ENCODE measurements at regions of chr4 and their contacts with region 1.

Region 1: DNA sequence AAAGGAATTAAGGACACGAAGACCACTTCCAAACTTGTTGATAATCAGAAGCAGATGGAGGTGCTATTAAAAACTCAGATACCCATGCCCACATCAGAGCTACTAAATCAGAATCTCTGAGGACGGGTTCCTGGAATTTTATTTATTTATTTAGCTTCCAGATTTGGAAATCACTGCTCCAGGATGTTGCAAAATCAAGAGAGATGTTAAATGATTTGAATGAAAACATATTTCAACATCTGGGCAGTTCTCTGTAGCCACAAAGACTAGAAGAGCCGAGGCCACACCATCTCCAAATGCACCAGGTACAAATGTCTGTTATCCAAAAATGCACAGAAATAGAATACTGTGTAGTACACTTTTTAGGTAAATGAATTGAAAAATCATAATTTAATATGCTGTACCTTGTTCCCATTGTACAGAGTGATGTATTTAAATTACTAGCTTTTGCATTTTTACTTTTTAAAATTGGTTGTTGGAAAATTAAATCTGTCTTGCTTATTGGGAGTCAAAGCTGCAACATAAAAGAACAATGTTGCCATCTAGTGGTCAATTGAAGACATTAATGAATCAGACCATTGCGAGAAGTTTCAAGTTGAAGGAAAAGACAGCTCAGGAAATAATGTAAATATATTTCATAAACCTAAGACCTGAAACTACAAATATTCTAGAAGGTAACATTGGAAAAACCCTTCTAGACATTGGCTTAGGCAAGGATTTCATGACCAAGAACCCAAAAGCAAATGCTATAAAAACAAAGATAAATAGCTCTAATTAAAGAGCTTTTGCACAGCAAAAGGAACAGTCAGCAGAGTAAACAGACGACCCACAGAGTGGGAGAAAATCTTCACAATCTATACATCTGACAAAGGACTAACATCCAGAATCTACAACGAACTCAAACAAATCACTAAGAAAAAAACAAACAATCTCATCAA is 151.3 kb upstream of the TTC29 start:
- DNase-seq: no peak
- ATAC-seq: peak in 1 of 2 donors; percentile 48
- H3K4me3 ChIP-seq: no peak overlapping the region
- H3K27ac ChIP-seq: no peak overlapping the region
- H3K4me1 ChIP-seq: no peaks in the 10 kb centered on the region
- H3K27me3 ChIP-seq: no peaks in the 10 kb centered on the region

Region 2: DNA sequence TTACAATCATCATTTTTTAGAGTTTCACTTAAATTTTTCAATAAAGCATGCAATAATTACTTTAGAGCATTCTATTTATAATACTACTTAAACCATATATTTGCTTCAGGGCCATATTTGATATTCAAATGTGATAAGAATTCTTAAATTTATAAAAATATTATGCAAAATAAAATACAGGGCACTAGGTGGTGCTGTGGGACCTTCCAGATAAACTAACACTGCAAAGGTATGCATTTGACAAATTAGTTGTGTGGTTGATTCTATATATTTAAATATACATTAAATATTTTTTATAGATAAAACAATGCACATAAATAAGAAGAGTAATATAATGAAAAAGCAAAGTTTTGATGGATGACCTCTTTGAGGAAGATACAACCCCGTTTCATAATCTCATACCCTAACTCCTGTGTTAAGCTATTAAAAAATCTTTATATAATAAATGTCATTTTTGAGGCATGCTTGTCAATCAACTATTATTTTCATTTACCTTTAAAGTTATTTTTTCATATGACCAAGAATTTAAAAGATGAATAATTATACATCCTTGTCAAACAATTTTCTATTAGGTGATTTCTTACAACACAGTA is 754.2 kb before region 1 on chr4:
- intact Hi-C with region 1: loop called in 2 of 4 experiments (anchors 5 to 10 kb)
- DNase-seq: no peak
- ATAC-seq: no peak
- H3K4me3 ChIP-seq: no peak overlapping the region
- H3K27ac ChIP-seq: no peak overlapping the region
- H3K4me1 ChIP-seq: no peaks in the 10 kb centered on the region
- H3K27me3 ChIP-seq: no peaks in the 10 kb centered on the region

Region 3: GRCh38 chr4:147019061-147019460 is 77.9 kb before region 1 on chr4:
- intact Hi-C with region 1: loop called (anchors 2 to 5 kb)
- DNase-seq: peak; percentile 42 to 85 (median 77)
- ATAC-seq: peak; percentile 81 to 86
- H3K4me3 ChIP-seq: no peak overlapping the region
- H3K27ac ChIP-seq: no peak overlapping the region
- H3K4me1 ChIP-seq: no peaks in the 10 kb centered on the region
- H3K27me3 ChIP-seq: no peaks in the 10 kb centered on the region

Region 4: GRCh38 chr4:147029296-147029695 is 67.6 kb before region 1 on chr4:
- intact Hi-C with region 1: loop called in 1 of 4 experiments (anchors 5 kb)
- DNase-seq: no peak
- ATAC-seq: no peak
- H3K4me3 ChIP-seq: no peak overlapping the region
- H3K27ac ChIP-seq: no peak overlapping the region
- H3K4me1 ChIP-seq: no peaks in the 10 kb centered on the region
- H3K27me3 ChIP-seq: no peaks in the 10 kb centered on the region

Region 5: DNA sequence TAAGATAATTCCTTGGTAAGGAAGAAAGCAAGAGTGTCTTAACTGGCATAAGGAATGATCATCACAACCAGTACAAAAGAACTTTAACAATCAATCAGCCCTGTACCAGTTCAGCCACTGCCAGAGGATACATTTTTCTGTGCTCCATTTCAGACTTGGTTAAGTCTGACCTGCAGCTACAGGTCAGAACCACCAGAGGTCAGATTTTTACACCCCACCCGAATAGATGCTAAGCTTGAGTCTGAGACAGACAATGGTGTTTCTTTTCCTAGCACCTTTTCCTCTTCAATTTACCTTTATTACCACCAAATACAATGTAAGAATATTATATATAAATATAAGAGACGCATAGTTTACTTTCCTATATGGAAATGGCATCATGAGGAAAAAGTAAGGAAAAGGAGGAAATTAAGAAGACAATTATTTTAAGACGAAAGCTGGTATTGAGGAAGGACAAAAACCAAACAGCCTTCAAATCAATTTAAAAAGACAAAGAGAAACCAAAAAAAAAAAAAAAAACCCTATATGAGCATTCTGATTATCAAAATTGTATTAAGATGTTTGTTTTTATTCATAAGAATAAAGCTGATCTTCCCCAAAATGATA is 64.1 kb after region 1 on chr4:
- intact Hi-C with region 1: no loop called
- DNase-seq: no peak
- ATAC-seq: peak; percentile 62 to 70
- H3K4me3 ChIP-seq: no peak overlapping the region
- H3K27ac ChIP-seq: no peak overlapping the region
- H3K4me1 ChIP-seq: peaks cover 4% of the 10 kb centered on the region
- H3K27me3 ChIP-seq: no peaks in the 10 kb centered on the region